ENCODE measurements at regions of chr9 and their contacts with region 1.

Region 1: DNA sequence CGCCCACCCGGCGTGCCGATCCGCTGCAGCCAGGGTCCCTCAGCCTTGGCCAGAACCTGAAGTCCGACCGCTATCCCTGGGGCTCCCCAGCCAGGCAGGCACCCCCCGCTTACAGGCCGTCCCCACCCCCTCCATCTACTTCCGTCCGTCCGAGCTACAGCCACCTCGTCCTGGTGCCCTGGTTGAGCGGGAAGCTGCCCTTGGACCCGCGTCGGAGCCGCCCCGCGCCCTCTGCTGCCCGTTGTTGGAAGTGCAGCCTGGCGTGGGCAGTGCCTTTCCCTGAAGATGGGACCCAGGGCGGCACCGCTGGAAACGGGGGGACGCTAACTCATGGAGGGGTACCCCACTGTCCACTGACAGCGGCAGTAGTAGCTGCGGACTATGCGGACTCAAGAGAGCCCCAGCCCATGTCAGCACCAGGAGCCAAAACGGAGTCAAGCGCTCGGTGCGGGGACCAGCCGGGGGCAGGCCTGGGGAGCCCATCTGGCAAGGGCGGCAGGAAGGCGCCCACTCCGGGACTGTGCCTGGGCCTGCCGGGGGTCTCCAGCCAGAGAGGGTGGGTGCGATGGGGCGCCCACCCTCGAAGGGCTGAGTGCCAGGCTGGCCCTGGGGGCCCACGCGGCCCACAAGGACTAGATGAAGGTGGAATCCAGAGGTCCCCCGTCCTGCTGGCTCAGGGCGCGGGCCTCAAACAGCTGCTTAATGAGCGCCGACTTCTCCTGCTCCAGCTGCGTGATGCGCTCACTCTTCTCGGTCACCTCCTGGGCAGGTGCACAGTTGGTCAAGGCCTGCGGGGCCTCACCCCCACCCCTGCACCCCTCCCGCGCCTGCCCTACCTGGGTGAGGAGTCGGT is 6.1 kb downstream of the SAPCD2 start:
- DNase-seq: peak in 3 of 5 donors; percentile 34 to 56 (median 40)
- H3K4me3 ChIP-seq: no peak overlapping the region
- H3K4me3 Mint-ChIP-seq: no peak overlapping the region
- H3K27ac ChIP-seq: no peak overlapping the region
- H3K27ac Mint-ChIP-seq: peak overlapping the region in 2 of 7 donors; percentile 41 to 53
- H3K4me1 ChIP-seq: peaks cover 11% of the 10 kb centered on the region
- H3K4me1 Mint-ChIP-seq: peaks cover 4 to 10% (median 7%) of the 10 kb centered on the region in 4 donors
- H3K27me3 ChIP-seq: no peaks in the 10 kb centered on the region
- H3K27me3 Mint-ChIP-seq: peaks cover 0 to 4% of the 10 kb centered on the region in 2 donors

Region 2: GRCh38 chr9:137046098-137046787 is 18.0 kb before region 1 on chr9 and contains the start of gene NPDC1:
- CTCF ChIA-PET with region 1: interaction called, 58 read pairs
- POLR2A ChIA-PET with region 1: interaction called, 12 read pairs
- intact Hi-C with region 1: loop called (anchors 1 kb)
- DNase-seq: peak; percentile 72 to 79 (median 77)
- H3K4me3 ChIP-seq: peak within 1 kb of the TSS in 1 of 2 donors; percentile 72
- H3K4me3 Mint-ChIP-seq: peak within 1 kb of the TSS; percentile 72 to 88 (median 82)
- H3K27ac ChIP-seq: no peak within 1 kb of the TSS
- H3K27ac Mint-ChIP-seq: peak within 1 kb of the TSS in 3 of 7 donors; percentile 52 to 84 (median 53)
- H3K4me1 ChIP-seq: peaks cover 37% of the 10 kb centered on the region
- H3K4me1 Mint-ChIP-seq: peaks cover 3 to 22% (median 9%) of the 10 kb centered on the region in 4 donors
- H3K27me3 ChIP-seq: peaks cover 32% of the 10 kb centered on the region
- H3K27me3 Mint-ChIP-seq: peaks cover 15 to 19% of the 10 kb centered on the region in 2 donors
- total RNA-seq, gene NPDC1: 20.7 to 21.4 TPM

Region 3: GRCh38 chr9:137077010-137077747 is 12.9 kb after region 1 on chr9 and contains the start of gene UAP1L1:
- CTCF ChIA-PET with region 1: interaction called, 16 read pairs
- POLR2A ChIA-PET with region 1: interaction called, 6 read pairs
- intact Hi-C with region 1: no loop called
- DNase-seq: peak; percentile 32 to 63 (median 36)
- H3K4me3 ChIP-seq: peak within 1 kb of the TSS in 1 of 2 donors; percentile 45
- H3K4me3 Mint-ChIP-seq: peak within 1 kb of the TSS; percentile 39 to 82 (median 72)
- H3K27ac ChIP-seq: peak within 1 kb of the TSS; percentile 38
- H3K27ac Mint-ChIP-seq: peak within 1 kb of the TSS in 3 of 7 donors; percentile 24 to 63 (median 29)
- H3K4me1 ChIP-seq: peaks cover 8% of the 10 kb centered on the region
- H3K4me1 Mint-ChIP-seq: peaks cover 0 to 3% (median 1%) of the 10 kb centered on the region in 4 donors
- H3K27me3 ChIP-seq: no peaks in the 10 kb centered on the region
- H3K27me3 Mint-ChIP-seq: no peaks in the 10 kb centered on the region
- total RNA-seq, gene UAP1L1: 10.6 to 12.5 TPM

Region 4: DNA sequence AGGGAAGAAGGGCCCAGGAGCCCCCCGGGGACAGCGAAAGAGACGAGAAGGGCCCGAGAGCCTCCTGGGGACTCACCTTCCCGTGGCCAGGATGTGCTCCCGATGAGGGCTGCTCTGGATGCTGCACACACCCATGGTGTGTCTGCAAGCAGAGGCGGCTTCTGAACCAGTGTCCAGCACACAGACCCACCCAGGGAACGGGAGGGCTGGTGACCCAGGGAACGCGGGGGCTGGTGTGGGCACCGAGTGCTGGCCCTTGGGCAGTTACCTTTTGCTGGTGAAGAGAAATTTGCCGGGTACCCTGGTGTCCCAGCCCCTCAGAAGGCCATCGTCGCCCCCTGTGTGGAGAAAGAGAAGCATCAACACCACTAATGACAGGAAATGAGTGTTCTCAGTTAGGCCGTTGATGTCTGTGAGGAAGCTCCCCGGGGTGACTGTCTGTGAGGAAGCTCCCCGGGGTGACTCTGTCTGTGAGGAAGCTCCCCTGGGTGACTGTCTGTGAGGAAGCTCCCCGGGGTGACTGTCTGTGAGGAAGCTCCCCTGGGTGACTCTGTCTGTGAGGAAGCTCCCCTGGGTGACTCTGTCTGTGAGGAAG is 500.7 kb after region 1 on chr9:
- CTCF ChIA-PET with region 1: no interaction called
- POLR2A ChIA-PET with region 1: no interaction called
- intact Hi-C with region 1: no loop called
- DNase-seq: no peak
- H3K4me3 ChIP-seq: no peak overlapping the region
- H3K4me3 Mint-ChIP-seq: no peak overlapping the region
- H3K27ac ChIP-seq: no peak overlapping the region
- H3K27ac Mint-ChIP-seq: peak overlapping the region in 1 of 7 donors; percentile 65
- H3K4me1 ChIP-seq: no peaks in the 10 kb centered on the region
- H3K4me1 Mint-ChIP-seq: peaks cover 3 to 8% (median 4%) of the 10 kb centered on the region in 4 donors
- H3K27me3 ChIP-seq: no peaks in the 10 kb centered on the region
- H3K27me3 Mint-ChIP-seq: no peaks in the 10 kb centered on the region